Ovary (tissue), 10 donors: ENCODE measurements at regions of chr6 and their contacts with region 1.

Region 1: GRCh38 chr6:154156135-154156896 is 117.3 kb downstream of the OPRM1 start:
- DNase-seq: peak in 1 of 5 donors; percentile 27
- H3K4me3 ChIP-seq: no peak overlapping the region
- H3K27ac ChIP-seq: peak overlapping the region in 1 of 2 donors; percentile 54
- H3K4me1 ChIP-seq: peaks cover 1% of the 10 kb centered on the region
- H3K27me3 ChIP-seq: no peaks in the 10 kb centered on the region
- CTCF ChIP-seq: no peak
- EP300 ChIP-seq: no peak
- POLR2A ChIP-seq: no peak

Region 2: GRCh38 chr6:154276810-154277628 is 120.7 kb after region 1 on chr6:
- intact Hi-C with region 1: loop called in 3 of 4 experiments (anchors 5 kb)
- DNase-seq: no peak
- H3K4me3 ChIP-seq: peak overlapping the region; percentile 22
- H3K27ac ChIP-seq: no peak overlapping the region
- H3K4me1 ChIP-seq: peaks cover 4% of the 10 kb centered on the region
- H3K27me3 ChIP-seq: no peaks in the 10 kb centered on the region
- CTCF ChIP-seq: peak; percentile 47 to 59 (median 57)
- EP300 ChIP-seq: no peak
- POLR2A ChIP-seq: no peak

Region 3: GRCh38 chr6:154410619-154411072 is 254.3 kb after region 1 on chr6:
- intact Hi-C with region 1: loop called in 1 of 4 experiments (anchors 10 kb)
- DNase-seq: peak; percentile 67 to 77 (median 70)
- H3K4me3 ChIP-seq: peak overlapping the region; percentile 5
- H3K27ac ChIP-seq: peak overlapping the region; percentile 71 to 81
- H3K4me1 ChIP-seq: peaks cover 9% of the 10 kb centered on the region
- H3K27me3 ChIP-seq: no peaks in the 10 kb centered on the region
- CTCF ChIP-seq: no peak
- EP300 ChIP-seq: no peak
- POLR2A ChIP-seq: no peak